BJ (cell line): ENCODE measurements at regions of chr1 and their contacts with region 1.

Region 1: DNA sequence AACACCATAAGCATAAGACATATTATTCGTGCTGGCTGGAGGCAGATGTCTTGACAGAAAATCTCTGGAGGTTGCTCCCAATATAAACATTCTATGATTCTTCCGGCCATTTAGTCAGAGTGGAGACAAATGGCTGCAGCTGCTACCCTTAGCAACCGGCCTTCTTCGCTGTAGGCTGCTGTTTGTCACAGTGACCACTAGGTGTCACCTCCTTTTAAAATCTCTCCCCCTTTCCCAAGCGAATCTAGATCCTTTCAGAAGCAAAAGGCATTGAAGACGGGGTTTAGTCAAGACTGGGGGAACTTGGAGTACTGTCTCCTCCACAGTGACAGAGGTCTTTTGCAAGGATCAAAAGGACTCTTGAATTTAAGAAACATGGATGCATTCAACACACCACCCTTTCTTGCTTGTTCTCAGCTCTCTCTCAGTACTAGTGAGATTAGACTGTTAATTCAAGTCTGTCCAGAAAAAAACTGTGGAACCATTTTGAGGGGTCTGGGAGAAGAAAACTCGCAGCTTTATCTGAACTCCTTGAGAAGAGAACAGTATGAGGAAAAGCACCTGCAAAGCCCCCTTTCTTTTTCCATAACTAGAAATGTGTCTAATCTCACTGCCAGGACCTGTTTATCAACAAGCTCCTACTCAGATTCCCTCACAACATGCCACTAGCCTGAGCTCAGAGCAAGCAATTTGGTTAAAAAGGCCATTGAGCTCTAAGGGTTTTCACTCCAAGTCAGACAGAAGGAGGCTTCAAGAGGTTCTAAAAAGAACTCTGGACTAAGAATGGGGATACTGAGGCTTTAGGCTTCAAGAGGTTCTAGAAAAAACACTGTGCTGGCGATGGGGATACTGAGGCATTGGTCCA is 408.3 kb upstream of the PLXNA2 start:
- DNase-seq: peak; percentile 19
- H3K4me3 ChIP-seq: no peak overlapping the region
- H3K27me3 ChIP-seq: no peaks in the 10 kb centered on the region
- CTCF ChIP-seq: peak; percentile 88

Region 2: GRCh38 chr1:208637181-208637580 is 15.3 kb before region 1 on chr1:
- CTCF ChIA-PET with region 1: interaction called, 11 read pairs
- POLR2A ChIA-PET with region 1: no interaction called
- DNase-seq: no peak
- H3K4me3 ChIP-seq: no peak overlapping the region
- H3K27me3 ChIP-seq: no peaks in the 10 kb centered on the region
- CTCF ChIP-seq: no peak

Region 3: GRCh38 chr1:209207701-209208286 is 555.3 kb after region 1 on chr1:
- CTCF ChIA-PET with region 1: interaction called, 27 read pairs
- POLR2A ChIA-PET with region 1: no interaction called
- DNase-seq: no peak
- H3K4me3 ChIP-seq: 0 out of 2 replicates have a peak overlapping the region, but pooled peaks have one; percentile 14
- H3K27me3 ChIP-seq: peaks cover 22% of the 10 kb centered on the region
- CTCF ChIP-seq: peak; percentile 92